Activated naive CD4-positive, alpha-beta T cell treated with anti-CD3 and anti-CD28 coated beads for 36 hours (primary cell): ENCODE measurements at regions of chr6 and their contacts with region 1.

Region 1: DNA sequence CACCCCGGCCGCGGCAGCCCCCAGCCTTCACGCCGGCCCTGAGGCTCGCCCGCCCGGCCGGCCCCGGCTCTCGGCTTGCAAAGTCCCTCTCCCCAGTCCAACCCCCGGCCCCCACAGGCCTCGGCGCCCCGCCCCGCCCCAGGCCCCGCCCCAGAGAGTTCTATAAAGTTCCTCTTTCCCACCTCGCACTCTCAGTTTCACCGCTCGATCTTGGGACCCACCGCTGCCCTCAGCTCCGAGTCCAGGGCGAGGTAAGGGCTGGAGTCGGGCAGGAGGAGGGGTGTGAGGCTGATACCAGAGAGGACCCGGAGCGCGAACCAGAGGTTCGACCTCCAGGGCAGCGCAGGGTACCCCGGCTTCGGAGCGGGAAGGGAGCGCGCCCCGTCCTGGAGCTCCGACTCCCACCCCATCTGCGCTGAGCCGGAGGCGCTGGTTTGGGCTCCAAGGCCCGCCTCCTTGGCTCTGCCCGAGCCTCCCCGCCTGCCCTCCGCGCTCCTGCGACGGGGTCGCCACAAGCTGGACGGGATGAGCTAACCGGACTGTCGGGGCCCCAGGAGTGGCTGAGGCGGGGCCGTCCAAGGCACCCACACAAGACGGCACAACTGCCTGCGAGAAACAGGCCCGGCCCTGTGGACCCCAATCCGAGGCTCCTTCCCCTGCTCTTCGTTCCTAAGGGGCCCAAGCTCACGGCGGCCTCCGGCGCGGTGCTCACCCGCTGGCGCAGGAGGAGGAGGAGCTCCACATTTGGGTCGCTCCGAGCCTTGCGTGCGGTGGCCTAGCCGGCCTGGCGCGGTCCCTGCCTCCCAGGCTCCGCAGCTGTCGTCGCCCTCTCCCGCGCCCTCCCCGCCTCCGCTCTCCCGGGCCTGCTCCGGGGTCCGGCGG is at the start of gene IRF4:
- DNase-seq: peak; percentile 70
- H3K4me3 Mint-ChIP-seq: peak within 1 kb of the TSS; percentile 93
- H3K27ac Mint-ChIP-seq: peak within 1 kb of the TSS; percentile 95
- H3K4me1 Mint-ChIP-seq: peaks cover 44% of the 10 kb centered on the region
- H3K27me3 Mint-ChIP-seq: peaks cover 4% of the 10 kb centered on the region
- total RNA-seq, gene IRF4: 500 to 504 TPM

Region 2: DNA sequence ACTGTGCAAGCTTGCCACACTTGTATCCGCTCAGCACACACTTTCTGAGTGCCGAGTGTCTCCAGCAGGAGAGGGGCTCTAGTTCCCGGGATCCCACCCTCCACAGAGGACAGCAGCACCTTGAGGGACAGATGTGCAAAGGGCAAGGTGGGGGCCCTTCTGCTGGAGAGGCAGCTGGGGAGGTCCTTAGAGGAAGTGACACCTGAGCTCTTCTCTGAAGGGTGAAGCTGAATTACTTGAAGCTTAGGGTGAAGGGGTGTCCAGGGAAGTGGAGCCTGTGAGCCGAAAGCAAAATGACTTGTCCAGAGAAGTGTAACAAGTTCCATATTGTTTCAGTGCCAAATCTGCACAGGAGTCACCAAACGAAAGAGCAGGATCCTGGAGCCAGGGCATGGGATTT is 235.8 kb before region 1 on chr6:
- CTCF ChIA-PET with region 1: no interaction called
- intact Hi-C with region 1: no loop called
- DNase-seq: no peak
- H3K4me3 Mint-ChIP-seq: no peak overlapping the region
- H3K27ac Mint-ChIP-seq: no peak overlapping the region
- H3K4me1 Mint-ChIP-seq: peaks cover 7% of the 10 kb centered on the region
- H3K27me3 Mint-ChIP-seq: peaks cover 35% of the 10 kb centered on the region

Region 3: GRCh38 chr6:291697-292505 is 99.9 kb before region 1 on chr6 and contains the start of gene DUSP22:
- CTCF ChIA-PET with region 1: interaction called, 3 read pairs
- intact Hi-C with region 1: loop called (anchors 1 kb)
- DNase-seq: peak; percentile 85
- H3K4me3 Mint-ChIP-seq: peak within 1 kb of the TSS; percentile 92
- H3K27ac Mint-ChIP-seq: peak within 1 kb of the TSS; percentile 95
- H3K4me1 Mint-ChIP-seq: peaks cover 67% of the 10 kb centered on the region
- H3K27me3 Mint-ChIP-seq: no peaks in the 10 kb centered on the region
- total RNA-seq, gene DUSP22: 44.6 to 46.9 TPM

Region 4: DNA sequence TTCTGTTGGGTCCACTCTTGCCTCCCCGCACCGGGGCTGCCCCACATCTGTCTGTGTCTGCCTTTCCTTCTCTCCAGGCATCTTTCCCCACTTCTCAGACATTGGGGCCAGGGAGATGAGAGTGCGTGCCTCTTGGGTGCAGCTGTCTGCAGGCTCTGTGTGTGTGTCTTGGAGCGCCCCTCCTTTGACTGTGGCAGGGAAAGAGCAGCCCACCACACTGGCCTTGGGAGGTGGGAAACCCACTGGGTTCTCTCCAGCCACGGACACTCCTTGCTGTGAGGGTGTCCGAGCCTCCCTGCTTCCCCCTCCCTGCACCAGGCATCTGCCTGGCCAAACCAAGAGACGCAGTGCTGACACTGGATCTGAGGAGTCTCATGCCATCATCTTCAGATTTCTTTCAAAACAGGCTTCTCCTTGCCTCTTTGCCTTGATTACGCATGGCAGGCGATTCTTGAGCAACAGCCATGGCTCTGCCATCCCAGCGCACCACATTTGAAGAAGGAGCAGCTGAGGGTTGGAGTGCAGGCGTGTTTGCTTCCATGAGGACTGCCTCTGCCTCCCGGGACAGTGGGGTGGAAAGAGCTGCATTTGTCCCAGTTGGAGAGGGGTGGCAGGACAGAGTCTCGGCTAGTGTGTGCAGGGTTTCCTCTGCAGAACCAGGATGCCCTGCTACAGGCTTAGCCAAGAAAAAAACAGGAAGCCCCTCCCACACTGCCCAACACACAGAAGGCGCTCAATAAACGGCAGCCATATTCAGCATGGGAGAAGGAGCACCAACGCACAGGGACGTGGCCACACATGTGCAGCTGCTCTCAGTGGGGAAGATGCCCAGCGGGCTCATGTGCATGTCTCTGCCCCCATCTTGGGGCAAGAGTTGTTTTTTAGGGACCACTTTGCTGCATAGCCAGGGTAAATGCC is 36.1 kb after region 1 on chr6:
- CTCF ChIA-PET with region 1: no interaction called
- intact Hi-C with region 1: no loop called
- DNase-seq: no peak
- H3K4me3 Mint-ChIP-seq: no peak overlapping the region
- H3K27ac Mint-ChIP-seq: no peak overlapping the region
- H3K4me1 Mint-ChIP-seq: peaks cover 53% of the 10 kb centered on the region
- H3K27me3 Mint-ChIP-seq: no peaks in the 10 kb centered on the region

Region 5: DNA sequence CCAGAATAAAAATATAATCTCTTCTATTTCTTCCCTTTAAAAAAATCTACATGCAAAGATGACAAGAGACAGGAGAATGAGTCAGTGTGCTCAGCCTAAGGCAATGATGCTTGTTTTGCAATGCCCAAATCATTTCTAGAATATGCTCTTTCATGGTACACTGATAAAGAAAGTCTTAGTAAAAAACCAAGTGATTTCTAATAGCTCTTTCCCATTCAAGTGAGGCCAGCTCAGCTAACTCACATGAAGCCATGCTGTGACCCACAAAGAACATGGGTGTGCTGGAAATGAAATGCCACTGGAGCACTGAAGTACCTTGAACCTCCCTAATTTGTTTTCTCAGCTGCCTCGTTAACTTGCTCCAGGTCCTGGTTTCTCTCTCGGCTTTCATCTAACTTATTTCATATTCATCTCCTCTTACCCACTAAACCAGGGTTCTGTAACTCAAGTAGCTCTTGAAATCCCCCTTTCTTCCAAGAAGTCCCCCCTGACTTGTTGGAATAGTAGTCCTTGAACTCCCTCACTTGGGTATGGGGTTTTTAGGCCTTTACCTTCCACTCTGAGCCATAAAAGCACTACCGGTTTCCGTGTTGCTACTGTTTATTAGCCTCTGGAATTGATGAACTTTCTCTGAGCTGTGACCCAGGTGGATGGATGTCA is 92.4 kb after region 1 on chr6:
- CTCF ChIA-PET with region 1: interaction called, 5 read pairs
- intact Hi-C with region 1: loop called (anchors 1 kb)
- DNase-seq: peak; percentile 83
- H3K4me3 Mint-ChIP-seq: peak overlapping the region; percentile 35
- H3K27ac Mint-ChIP-seq: peak overlapping the region; percentile 99
- H3K4me1 Mint-ChIP-seq: peaks cover 87% of the 10 kb centered on the region
- H3K27me3 Mint-ChIP-seq: no peaks in the 10 kb centered on the region

Region 6: GRCh38 chr6:506508-506907 is 114.7 kb after region 1 on chr6:
- CTCF ChIA-PET with region 1: interaction called, 4 read pairs
- intact Hi-C with region 1: loop called (anchors 1 kb)
- DNase-seq: peak; percentile 89
- H3K4me3 Mint-ChIP-seq: peak overlapping the region; percentile 45
- H3K27ac Mint-ChIP-seq: peak overlapping the region; percentile 99
- H3K4me1 Mint-ChIP-seq: peaks cover 95% of the 10 kb centered on the region
- H3K27me3 Mint-ChIP-seq: no peaks in the 10 kb centered on the region

Region 7: GRCh38 chr6:593139-593906 is 201.5 kb after region 1 on chr6:
- CTCF ChIA-PET with region 1: interaction called, 20 read pairs
- intact Hi-C with region 1: loop called (anchors 1 kb)
- DNase-seq: peak; percentile 87
- H3K4me3 Mint-ChIP-seq: no peak overlapping the region
- H3K27ac Mint-ChIP-seq: no peak overlapping the region
- H3K4me1 Mint-ChIP-seq: peaks cover 11% of the 10 kb centered on the region
- H3K27me3 Mint-ChIP-seq: no peaks in the 10 kb centered on the region

Region 8: DNA sequence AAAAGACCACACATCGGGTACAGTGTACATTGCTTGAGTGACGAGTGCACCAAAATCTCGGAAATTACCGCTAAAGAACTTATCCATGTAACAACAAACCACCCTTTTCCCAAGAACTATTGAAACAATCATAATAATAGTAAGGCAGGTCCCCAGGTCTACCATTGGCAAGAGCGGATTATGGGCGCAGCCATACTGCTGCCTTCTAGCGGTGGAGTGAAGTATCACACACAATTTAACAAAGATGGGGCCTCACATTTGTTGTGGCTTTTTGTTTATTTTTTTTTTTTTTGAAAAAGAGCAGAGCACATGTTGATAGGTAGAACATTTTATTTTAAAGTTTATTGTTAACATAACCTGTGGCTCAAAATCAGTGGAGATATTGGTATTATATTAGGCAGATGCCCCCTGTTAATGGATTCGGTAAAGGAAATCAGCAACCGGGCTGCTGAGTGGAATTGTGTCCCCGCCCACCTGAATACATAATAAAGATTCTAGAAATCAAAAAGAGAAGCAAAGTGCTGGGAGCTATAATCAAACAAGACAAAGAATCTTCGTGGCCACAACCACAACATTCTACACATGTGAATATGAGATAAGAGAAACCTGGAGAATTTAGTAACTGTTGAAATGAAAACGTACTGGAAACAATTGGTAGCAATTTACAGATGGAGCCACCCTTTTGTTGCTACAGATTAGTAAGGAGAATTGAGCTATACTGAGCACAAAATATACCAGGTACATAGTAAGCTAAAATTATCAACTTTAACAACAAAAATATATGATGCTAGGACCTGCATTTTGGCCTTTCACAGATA is 395.4 kb after region 1 on chr6:
- CTCF ChIA-PET with region 1: no interaction called
- intact Hi-C with region 1: loop called (anchors 1 kb)
- DNase-seq: peak; percentile 28
- H3K4me3 Mint-ChIP-seq: no peak overlapping the region
- H3K27ac Mint-ChIP-seq: no peak overlapping the region
- H3K4me1 Mint-ChIP-seq: peaks cover 15% of the 10 kb centered on the region
- H3K27me3 Mint-ChIP-seq: peaks cover 9% of the 10 kb centered on the region

Region 9: GRCh38 chr6:1396952-1397868 is 1005.4 kb after region 1 on chr6:
- CTCF ChIA-PET with region 1: no interaction called
- intact Hi-C with region 1: loop called (anchors 5 kb)
- DNase-seq: peak; percentile 80
- H3K4me3 Mint-ChIP-seq: no peak overlapping the region
- H3K27ac Mint-ChIP-seq: no peak overlapping the region
- H3K4me1 Mint-ChIP-seq: peaks cover 10% of the 10 kb centered on the region
- H3K27me3 Mint-ChIP-seq: peaks cover 53% of the 10 kb centered on the region